ENCODE measurements at regions of chr3 and their contacts with region 1.

Region 1: GRCh38 chr3:69324362-69325025 is 61.4 kb downstream of the FRMD4B start:
- DNase-seq: no peak
- H3K4me3 Mint-ChIP-seq: no peak overlapping the region
- H3K27ac Mint-ChIP-seq: peak overlapping the region; percentile 85
- H3K4me1 Mint-ChIP-seq: peaks cover 56% of the 10 kb centered on the region
- H3K27me3 Mint-ChIP-seq: peaks cover 1% of the 10 kb centered on the region

Region 2: DNA sequence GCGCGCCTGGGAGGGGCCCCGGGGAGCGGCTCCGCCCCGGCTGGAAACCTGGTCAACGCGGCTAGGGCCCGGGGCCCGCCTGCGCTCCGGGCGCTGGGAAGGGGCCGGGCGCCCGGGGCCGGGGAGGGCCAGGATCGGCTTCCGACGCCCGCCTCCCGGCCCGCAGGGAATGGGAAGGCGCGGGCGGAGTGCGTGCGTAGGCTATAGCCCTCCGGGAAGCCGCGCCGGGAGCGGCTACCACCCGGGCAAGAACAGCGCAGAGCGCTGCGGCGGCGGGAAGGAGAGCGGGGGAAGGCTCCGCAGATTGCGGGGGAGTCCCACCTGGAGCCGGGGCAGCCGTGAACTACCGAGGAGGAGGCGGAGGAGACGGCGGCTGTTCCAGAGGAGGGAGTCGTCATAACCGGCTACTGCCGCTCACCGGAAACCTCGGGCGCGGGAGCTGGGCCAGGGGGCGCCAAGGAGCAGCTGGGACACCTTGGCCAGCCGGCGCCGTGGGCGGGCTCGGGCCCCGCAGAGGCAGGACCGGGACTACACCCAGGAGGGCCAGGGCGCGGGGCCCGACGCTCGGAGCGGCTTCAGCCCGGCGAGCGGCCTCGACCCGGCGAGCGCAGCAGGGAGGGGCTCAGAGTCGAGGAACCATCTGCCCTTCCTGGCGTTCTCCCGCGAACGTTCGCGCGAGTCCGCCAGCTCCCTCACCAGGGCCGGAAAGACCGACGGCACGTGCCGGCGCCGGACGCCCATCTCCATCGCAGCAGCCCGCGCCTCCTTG is 311.1 kb before region 1 on chr3 and contains the start of gene EOGT:
- intact Hi-C with region 1: loop called (anchors 2 kb)
- DNase-seq: peak; percentile 79
- H3K4me3 Mint-ChIP-seq: peak within 1 kb of the TSS; percentile 89
- H3K27ac Mint-ChIP-seq: peak within 1 kb of the TSS; percentile 86
- H3K4me1 Mint-ChIP-seq: peaks cover 30% of the 10 kb centered on the region
- H3K27me3 Mint-ChIP-seq: no peaks in the 10 kb centered on the region
- total RNA-seq, gene EOGT: 9.6 and 12.5 TPM in 2 replicates

Region 3: DNA sequence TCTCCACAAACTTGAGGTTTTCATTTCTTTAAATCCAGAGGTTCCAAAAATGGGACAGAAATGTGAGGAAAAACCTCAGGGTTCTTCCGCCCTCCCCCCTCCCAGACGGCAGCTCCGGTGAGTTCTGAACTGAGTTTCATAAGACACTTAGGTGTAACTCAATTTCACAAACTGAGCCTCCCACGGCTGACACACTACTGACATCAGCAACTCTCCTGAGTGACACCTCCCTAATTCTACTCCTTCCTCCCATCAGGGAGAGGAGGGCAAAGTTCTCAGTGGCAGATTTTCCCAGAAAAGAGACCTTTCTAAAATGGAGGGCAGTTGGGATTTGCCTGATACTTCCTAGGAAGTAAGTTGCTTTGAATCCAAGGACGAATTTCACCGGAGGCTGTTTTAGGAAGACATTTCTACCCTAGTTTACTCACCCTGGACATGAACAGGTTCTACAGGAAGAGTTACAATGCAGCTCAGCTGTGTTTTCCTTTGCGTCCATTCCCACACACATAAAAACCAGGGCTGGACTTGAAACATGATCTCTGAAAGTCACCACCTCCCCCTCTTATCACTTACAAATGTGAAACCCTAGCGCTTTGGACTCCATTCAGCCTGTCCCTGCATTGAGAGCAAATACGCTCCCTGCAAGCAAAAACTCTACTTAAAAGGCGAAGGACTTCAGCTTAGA is 124.0 kb before region 1 on chr3:
- intact Hi-C with region 1: loop called (anchors 1 kb)
- DNase-seq: peak; percentile 36
- H3K4me3 Mint-ChIP-seq: peak overlapping the region; percentile 92
- H3K27ac Mint-ChIP-seq: peak overlapping the region; percentile 92
- H3K4me1 Mint-ChIP-seq: peaks cover 79% of the 10 kb centered on the region
- H3K27me3 Mint-ChIP-seq: no peaks in the 10 kb centered on the region

Region 4: GRCh38 chr3:69339760-69340159 is 15.3 kb after region 1 on chr3:
- intact Hi-C with region 1: no loop called
- DNase-seq: no peak
- H3K4me3 Mint-ChIP-seq: no peak overlapping the region
- H3K27ac Mint-ChIP-seq: peak overlapping the region; percentile 22
- H3K4me1 Mint-ChIP-seq: peaks cover 9% of the 10 kb centered on the region
- H3K27me3 Mint-ChIP-seq: peaks cover 3% of the 10 kb centered on the region

Region 5: DNA sequence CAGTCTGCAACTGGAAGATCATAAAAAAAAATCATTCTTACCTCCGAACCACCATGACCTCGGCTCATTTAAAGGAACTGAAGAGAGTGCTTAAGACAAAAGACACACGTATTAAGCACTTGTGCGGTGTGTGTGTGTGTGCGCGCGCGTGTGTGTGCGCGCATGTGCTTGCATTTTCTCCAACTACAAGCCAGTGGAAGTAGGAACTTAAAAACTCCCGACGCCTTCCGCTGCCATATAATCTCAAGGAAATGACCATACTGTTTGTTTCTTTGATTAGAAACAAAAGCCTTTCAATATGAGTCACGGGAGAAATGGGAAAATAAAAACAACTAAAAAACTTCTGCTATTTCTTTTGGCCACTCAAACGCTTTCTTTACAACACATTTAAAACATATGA is 29.0 kb after region 1 on chr3:
- intact Hi-C with region 1: loop called (anchors 1 kb)
- DNase-seq: no peak
- H3K4me3 Mint-ChIP-seq: peak overlapping the region; percentile 84
- H3K27ac Mint-ChIP-seq: peak overlapping the region; percentile 67
- H3K4me1 Mint-ChIP-seq: peaks cover 30% of the 10 kb centered on the region
- H3K27me3 Mint-ChIP-seq: peaks cover 16% of the 10 kb centered on the region

Region 6: DNA sequence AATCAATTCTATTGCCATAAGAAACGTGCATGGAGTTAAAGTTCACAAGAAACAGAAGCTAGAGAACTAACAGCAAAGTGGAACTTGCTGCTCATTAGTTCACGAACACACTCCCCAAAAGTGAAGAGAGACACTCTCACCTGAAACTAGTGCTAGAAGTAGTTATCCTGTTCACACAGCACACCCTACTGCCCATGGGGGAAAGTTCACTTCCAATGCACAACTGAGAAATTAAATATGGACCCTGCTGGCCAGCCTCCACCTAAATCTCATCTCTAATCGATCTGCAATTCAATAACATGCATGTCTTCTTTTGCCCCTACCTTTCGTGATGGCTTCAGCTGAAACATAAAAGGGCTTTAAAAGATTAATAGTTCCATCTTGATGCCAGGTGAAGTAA is 100.8 kb after region 1 on chr3:
- intact Hi-C with region 1: loop called (anchors 1 kb)
- DNase-seq: peak; percentile 2
- H3K4me3 Mint-ChIP-seq: no peak overlapping the region
- H3K27ac Mint-ChIP-seq: no peak overlapping the region
- H3K4me1 Mint-ChIP-seq: peaks cover 5% of the 10 kb centered on the region
- H3K27me3 Mint-ChIP-seq: no peaks in the 10 kb centered on the region

Region 7: DNA sequence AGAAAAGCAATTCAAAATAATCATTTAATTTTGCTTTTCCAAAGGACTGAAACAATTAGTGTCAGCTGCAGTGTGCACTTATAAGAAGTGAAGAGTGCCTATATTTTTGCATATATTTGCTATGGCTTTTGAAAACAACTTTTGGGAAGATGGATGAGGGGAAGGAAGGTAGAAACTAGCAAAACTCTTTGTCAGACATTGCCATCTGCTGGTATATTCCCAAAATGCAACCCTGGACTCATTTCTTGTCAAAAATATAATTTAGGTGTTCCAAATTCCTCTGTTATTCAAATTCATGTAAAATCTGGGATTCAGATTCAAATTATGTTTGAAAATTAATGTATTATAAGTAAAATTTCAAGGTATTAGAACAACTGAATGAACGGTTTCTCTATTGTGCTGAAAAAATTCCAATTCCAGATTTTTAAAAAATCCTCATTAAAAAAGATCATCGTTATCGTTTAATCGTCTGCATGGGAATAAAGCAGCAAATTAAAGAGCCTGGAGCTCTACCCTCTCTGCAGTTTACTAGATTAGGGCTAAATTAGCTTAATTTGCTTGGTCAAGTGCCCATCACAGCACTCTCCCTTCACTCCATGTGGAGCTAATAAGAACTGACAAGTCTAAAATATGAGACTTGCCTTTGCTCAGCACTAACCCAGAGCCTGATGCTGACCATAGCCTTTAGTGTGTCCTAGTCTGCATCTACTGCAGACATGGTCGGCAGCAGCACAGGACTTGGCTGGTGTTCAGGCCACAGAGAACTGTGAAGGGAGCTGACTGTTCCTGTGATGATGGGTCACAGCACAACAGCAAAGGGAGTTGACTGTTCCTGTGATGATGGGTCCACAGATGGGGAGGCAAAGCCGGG is 346.8 kb after region 1 on chr3:
- intact Hi-C with region 1: loop called (anchors 1 kb)
- DNase-seq: no peak
- H3K4me3 Mint-ChIP-seq: no peak overlapping the region
- H3K27ac Mint-ChIP-seq: no peak overlapping the region
- H3K4me1 Mint-ChIP-seq: no peaks in the 10 kb centered on the region
- H3K27me3 Mint-ChIP-seq: no peaks in the 10 kb centered on the region